ENCODE measurements at regions of chr1 and their contacts with region 1.

Region 1: DNA sequence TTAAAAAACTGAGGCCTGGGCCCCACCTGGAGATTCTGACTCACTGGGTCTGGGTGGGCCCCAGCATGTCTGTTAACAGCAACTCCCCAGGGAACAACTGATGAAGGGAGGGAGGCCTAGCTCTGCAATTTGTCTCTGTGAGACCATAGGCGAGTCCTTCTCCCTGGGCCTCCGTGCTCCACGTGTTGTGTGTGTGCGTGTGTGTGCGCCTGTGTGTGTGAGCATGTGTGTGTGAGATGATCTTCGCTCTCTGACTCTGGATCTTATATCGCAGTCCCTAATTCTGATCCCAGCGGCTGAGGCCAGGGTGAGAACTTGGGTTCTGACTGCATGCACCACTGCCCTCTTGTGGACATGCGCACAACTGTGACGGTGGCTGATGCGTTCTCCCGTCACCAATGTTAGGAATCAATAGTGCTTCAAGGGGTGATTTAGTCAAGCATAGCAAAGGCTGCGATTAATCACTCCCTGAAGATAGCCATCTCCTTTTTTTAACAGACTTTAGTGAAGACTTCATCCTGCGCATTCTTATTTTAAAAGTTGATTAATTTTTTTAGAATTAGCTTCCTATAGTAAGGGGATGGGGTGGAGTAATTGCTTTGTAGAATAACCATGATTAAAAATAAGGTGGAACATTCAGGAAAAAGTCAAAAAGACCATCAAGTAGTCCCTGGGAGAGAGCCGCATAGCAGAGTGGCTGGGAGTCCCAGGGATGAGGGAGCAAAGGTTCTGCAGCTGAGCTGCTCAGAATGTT is 62.4 kb upstream of the USP24 start:
- DNase-seq: peak; percentile 69 to 95 (median 85)

Region 2: GRCh38 chr1:55071477-55071876 is 206.1 kb before region 1 on chr1:
- intact Hi-C with region 1: loop called (anchors 5 kb)
- DNase-seq: peak in 3 of 10 donors; percentile 23 to 84 (median 54)

Region 3: DNA sequence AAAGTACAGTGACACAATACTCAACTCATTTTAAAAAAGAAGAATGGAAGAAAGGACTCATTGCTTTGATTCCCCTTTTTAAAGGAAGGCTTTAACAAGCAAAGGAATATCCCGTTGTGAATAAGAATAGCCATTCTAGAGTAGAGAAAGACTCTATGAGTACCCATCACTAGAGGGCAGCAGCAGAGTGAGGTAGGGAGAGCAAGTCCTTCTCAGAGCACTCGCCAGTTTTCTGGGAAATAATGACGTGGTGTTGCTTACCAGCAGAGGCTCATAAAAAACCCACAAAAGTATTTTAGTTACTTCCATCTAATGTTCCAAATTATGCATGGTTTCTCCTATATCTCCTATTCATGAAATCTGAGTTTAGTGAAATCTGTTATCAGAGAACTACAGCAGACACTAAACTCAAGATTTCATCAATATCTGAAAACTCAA is 137.0 kb before region 1 on chr1:
- intact Hi-C with region 1: loop called (anchors 1 kb)
- DNase-seq: peak in 6 of 10 donors; percentile 37 to 87 (median 56)

Region 4: GRCh38 chr1:55215256-55216021 is 62.1 kb before region 1 on chr1 and contains the start of gene USP24:
- intact Hi-C with region 1: loop called (anchors 5 kb)
- DNase-seq: peak; percentile 55 to 95 (median 66)